ENCODE measurements at regions of chr9 and their contacts with region 1.

Region 1: GRCh38 chr9:110183208-110184145 is 24.5 kb downstream of the C9orf152 start:
- DNase-seq: peak in 1 of 2 donors; percentile 59
- ATAC-seq: peak; percentile 65
- H3K4me3 ChIP-seq: no peak overlapping the region
- H3K27ac ChIP-seq: no peak overlapping the region
- H3K4me1 ChIP-seq: peaks cover 0 to 3% of the 10 kb centered on the region in 2 donors
- H3K27me3 ChIP-seq: no peaks in the 10 kb centered on the region

Region 2: GRCh38 chr9:110217656-110218099 is 34.2 kb after region 1 on chr9:
- intact Hi-C with region 1: loop called (anchors 2 to 5 kb)
- DNase-seq: no peak
- ATAC-seq: no peak
- H3K4me3 ChIP-seq: no peak overlapping the region
- H3K27ac ChIP-seq: no peak overlapping the region
- H3K4me1 ChIP-seq: no peaks in the 10 kb centered on the region
- H3K27me3 ChIP-seq: no peaks in the 10 kb centered on the region

Region 3: DNA sequence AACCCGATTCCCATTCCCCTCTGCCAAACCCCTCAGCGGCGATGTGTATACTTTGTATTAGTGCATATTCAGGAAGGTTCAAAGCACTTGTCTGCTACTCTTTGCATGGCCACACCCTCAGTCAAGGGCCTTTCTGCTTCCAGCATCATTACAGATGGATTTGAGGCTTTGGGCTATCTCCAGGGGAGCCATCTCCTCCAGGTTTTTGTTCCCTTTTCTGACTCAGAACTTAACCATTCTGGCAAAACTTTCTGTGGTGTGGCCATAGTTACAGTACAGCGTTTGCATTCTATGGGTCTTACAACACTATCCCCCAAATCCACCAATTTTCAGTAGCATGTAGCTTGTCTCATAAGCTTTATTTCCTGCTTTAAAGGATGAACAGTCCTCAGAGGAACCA is 432.0 kb after region 1 on chr9:
- intact Hi-C with region 1: loop called (anchors 10 kb)
- DNase-seq: no peak
- ATAC-seq: no peak
- H3K4me3 ChIP-seq: no peak overlapping the region
- H3K27ac ChIP-seq: no peak overlapping the region
- H3K4me1 ChIP-seq: no peaks in the 10 kb centered on the region
- H3K27me3 ChIP-seq: no peaks in the 10 kb centered on the region

Region 4: GRCh38 chr9:110623462-110624025 is 440.1 kb after region 1 on chr9:
- intact Hi-C with region 1: loop called (anchors 10 kb)
- DNase-seq: no peak
- ATAC-seq: peak; percentile 64
- H3K4me3 ChIP-seq: no peak overlapping the region
- H3K27ac ChIP-seq: no peak overlapping the region
- H3K4me1 ChIP-seq: peaks cover 0 to 6% of the 10 kb centered on the region in 2 donors
- H3K27me3 ChIP-seq: no peaks in the 10 kb centered on the region

Measured in aorta (tissue), 5 donors.